Activated CD4-positive, alpha-beta T cell treated with anti-CD3 and anti-CD28 coated beads, Interleukin-2, amount 10 ng/mL, durations not matched to agents 24 days and 14 days (primary cell): ENCODE measurements at regions of chr1 and their contacts with region 1.

Region 1: GRCh38 chr1:214261206-214262123 is 19.5 kb upstream of the SMYD2 start:
- DNase-seq: peak; percentile 95
- H3K4me3 Mint-ChIP-seq: no peak overlapping the region
- H3K27ac Mint-ChIP-seq: no peak overlapping the region
- H3K4me1 Mint-ChIP-seq: peaks cover 19% of the 10 kb centered on the region
- H3K27me3 Mint-ChIP-seq: peaks cover 55% of the 10 kb centered on the region

Region 2: DNA sequence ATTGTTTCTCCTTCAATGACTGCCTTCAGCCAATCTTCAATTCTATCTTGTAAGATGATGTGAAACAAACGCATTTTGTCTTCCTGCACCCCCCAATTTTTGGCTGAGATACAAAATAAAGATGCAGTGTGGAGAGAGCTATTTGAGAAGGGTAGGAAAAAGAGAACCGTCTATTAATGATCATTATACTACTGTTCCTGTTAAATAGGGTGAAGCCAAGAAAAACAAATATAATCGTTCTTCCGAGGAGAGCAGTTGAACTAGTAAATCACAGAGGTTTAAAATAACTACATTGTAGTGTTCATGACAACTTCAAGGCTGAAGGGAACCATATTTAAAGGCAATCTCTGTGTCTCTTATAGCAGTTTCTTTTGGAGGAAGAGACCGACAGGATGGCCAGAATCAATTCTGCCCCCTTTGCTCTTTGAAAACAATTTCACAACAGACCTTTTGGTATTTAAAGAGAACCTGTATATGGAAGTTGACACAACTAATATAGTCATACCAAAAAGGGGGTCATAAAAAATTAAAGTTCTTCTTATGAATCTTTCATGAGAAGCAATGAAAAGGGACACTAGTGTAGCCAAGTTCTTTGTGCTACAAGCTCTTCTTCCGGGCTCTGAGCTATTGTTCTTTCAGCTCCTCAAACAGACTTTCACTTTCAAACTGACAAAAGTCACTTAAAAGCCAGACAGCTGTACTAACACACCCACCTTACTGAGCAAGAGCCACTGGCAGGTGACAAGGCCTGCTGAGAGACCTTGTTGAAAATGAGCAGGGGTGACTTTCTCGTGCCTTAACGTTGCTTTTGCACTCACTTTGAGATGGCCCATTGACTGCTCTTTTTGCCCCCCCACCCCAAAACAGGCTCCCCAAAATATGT is 242.8 kb before region 1 on chr1:
- intact Hi-C with region 1: no loop called
- DNase-seq: peak; percentile 59
- H3K4me3 Mint-ChIP-seq: no peak overlapping the region
- H3K27ac Mint-ChIP-seq: no peak overlapping the region
- H3K4me1 Mint-ChIP-seq: no peaks in the 10 kb centered on the region
- H3K27me3 Mint-ChIP-seq: peaks cover 2% of the 10 kb centered on the region

Region 3: GRCh38 chr1:214213136-214213535 is 48.3 kb before region 1 on chr1:
- intact Hi-C with region 1: loop called (anchors 5 kb)
- DNase-seq: no peak
- H3K4me3 Mint-ChIP-seq: no peak overlapping the region
- H3K27ac Mint-ChIP-seq: no peak overlapping the region
- H3K4me1 Mint-ChIP-seq: no peaks in the 10 kb centered on the region
- H3K27me3 Mint-ChIP-seq: peaks cover 32% of the 10 kb centered on the region

Region 4: DNA sequence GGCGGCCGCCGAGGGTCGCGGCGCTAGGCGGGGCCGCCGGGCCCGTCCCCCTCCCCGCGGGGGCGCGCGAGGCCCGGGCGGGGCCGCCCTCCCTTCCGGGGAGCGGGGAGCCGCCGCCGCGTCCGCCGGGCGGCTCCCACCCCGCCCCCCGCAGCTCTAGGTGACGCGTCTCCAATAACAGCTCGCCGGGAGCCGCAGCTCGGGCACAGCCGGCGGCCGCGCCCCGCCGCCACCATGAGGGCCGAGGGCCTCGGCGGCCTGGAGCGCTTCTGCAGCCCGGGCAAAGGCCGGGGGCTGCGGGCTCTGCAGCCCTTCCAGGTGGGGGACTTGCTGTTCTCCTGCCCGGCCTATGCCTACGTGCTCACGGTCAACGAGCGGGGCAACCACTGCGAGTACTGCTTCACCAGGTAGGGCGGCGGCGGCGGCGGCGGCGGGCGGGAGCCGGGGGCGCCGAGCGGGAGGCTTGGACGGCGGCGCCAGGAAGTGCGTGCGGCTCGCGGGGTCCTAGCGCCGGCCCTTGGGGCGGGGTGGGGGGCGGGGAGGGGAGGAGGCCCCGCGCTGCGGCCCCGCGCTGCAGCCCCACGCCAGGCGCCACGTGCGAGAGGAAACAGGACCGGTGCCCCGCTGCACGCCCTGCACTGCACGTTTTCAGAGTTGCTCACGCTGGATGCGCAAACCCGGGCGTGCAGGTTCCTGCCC is 19.7 kb after region 1 on chr1 and contains the start of gene SMYD2:
- intact Hi-C with region 1: loop called (anchors 1 kb)
- DNase-seq: peak; percentile 90
- H3K4me3 Mint-ChIP-seq: peak within 1 kb of the TSS; percentile 93
- H3K27ac Mint-ChIP-seq: peak within 1 kb of the TSS; percentile 90
- H3K4me1 Mint-ChIP-seq: peaks cover 37% of the 10 kb centered on the region
- H3K27me3 Mint-ChIP-seq: no peaks in the 10 kb centered on the region
- total RNA-seq, gene SMYD2: 33.3 and 34.1 TPM in 2 replicates

Region 5: DNA sequence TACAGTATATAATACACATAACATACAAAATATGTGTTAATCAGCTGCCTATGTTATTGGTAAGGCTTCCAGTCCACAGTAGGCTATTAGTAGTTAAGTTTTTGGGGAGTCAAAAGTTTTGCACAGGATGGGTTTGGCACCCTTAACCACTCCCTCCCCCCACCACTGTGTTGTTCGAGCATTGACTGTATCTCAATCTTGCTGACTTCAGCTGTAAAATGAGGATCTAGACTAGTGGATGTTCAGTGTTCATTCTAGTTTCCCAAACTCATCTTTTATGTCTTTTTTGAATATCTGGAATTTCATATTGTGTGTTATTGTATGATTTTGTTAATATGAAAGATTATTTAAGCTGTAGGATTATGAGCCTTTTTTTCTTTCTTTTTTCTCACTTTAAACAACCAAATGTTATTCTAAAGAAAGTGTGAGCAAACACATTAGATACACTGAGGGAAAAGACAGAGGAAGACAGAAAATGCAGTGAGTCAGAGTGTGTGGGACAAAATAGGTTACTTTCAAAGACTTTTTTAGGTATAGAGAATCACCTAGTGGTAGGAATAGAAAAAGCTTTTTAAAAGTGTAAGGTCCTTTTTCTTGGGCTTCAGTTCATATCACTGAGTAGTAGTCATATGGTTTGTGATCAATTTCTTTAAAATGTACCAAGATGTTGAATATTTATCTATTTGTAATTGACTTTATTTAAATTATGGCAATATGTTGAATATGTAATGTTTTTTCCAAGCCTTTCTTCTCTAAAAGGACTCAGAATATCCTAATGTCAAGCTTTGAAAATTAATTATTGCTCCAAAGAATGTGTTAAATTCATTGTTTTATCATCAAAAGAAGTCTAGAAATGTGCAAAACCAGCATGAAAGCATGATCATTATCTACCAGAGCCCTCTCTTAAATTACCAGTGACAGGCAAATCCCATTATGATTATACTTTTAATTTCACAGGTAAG is 323.6 kb after region 1 on chr1:
- intact Hi-C with region 1: loop called (anchors 1 kb)
- DNase-seq: no peak
- H3K4me3 Mint-ChIP-seq: no peak overlapping the region
- H3K27ac Mint-ChIP-seq: peak overlapping the region; percentile 9
- H3K4me1 Mint-ChIP-seq: peaks cover 8% of the 10 kb centered on the region
- H3K27me3 Mint-ChIP-seq: peaks cover 2% of the 10 kb centered on the region

Region 6: GRCh38 chr1:214602764-214603657 is 341.5 kb after region 1 on chr1 and contains the start of gene CENPF:
- intact Hi-C with region 1: loop called (anchors 5 kb)
- DNase-seq: peak; percentile 98
- H3K4me3 Mint-ChIP-seq: peak within 1 kb of the TSS; percentile 90
- H3K27ac Mint-ChIP-seq: peak within 1 kb of the TSS; percentile 97
- H3K4me1 Mint-ChIP-seq: peaks cover 29% of the 10 kb centered on the region
- H3K27me3 Mint-ChIP-seq: no peaks in the 10 kb centered on the region
- total RNA-seq, gene CENPF: 54.4 and 63.0 TPM in 2 replicates